Activated CD8-positive, alpha-beta T cell treated with anti-CD3 and anti-CD28 coated beads, Interleukin-2, amount 10 ng/mL, durations not matched to agents 7 days and 5 days (primary cell): ENCODE measurements at regions of chr1 and their contacts with region 1.

Region 1: DNA sequence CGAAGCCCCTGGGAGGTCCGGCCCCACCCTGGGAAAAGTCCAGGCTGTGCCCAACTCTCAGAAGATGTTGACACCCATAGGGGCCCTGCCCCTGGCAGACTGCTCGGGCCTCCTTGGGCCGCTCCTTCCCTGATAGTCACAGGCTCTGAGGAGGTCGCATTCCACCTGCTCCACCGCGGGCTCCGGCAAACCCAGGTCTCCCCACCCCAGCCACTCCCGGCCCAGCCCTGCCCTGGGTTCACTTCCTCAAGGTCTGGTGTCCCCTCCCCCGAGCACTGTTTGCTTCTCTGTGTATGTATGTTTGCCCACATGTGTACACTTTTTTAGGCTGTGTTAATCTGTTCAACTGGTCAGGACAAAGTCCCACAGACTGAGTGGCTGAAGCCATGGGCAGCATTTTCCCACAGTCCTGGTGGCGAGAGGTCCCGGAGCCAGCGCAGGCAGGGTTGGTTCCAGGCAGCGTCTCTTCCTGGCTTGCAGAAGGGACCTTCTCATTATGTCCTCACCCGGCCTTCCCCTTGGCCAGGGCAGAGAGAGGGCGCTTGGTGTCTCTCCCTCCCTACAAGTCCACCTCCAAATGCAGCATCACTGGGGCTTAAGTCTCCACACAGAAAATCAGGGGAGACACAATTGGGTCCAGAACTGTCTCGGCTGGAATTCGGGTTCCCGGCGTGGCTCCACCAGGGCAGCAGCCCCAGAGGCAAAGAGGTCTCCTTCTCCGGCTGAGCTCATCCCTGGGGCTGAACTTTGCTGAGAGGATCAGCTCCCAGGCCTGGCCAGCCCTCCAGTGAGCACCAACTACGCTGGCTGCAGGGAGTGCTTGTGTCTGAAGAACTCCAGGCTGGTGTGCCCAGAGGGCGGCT is 10.5 kb upstream of the PRXL2B start:
- DNase-seq: no peak
- ATAC-seq: no peak
- H3K4me3 Mint-ChIP-seq: no peak overlapping the region
- H3K27ac Mint-ChIP-seq: peak overlapping the region; percentile 55
- H3K4me1 Mint-ChIP-seq: peaks cover 56% of the 10 kb centered on the region
- H3K27me3 Mint-ChIP-seq: peaks cover 5% of the 10 kb centered on the region

Region 2: GRCh38 chr1:2556277-2556677 is 19.8 kb before region 1 on chr1 and contains the start of gene TNFRSF14:
- CTCF ChIA-PET with region 1: interaction called, 19 read pairs
- POLR2A ChIA-PET with region 1: interaction called, 60 read pairs
- DNase-seq: peak; percentile 90
- ATAC-seq: peak; percentile 77
- H3K4me3 Mint-ChIP-seq: peak within 1 kb of the TSS; percentile 97
- H3K27ac Mint-ChIP-seq: peak within 1 kb of the TSS; percentile 98
- H3K4me1 Mint-ChIP-seq: peaks cover 46% of the 10 kb centered on the region
- H3K27me3 Mint-ChIP-seq: no peaks in the 10 kb centered on the region
- total RNA-seq, gene TNFRSF14: 85.8 to 86.5 TPM

Region 3: DNA sequence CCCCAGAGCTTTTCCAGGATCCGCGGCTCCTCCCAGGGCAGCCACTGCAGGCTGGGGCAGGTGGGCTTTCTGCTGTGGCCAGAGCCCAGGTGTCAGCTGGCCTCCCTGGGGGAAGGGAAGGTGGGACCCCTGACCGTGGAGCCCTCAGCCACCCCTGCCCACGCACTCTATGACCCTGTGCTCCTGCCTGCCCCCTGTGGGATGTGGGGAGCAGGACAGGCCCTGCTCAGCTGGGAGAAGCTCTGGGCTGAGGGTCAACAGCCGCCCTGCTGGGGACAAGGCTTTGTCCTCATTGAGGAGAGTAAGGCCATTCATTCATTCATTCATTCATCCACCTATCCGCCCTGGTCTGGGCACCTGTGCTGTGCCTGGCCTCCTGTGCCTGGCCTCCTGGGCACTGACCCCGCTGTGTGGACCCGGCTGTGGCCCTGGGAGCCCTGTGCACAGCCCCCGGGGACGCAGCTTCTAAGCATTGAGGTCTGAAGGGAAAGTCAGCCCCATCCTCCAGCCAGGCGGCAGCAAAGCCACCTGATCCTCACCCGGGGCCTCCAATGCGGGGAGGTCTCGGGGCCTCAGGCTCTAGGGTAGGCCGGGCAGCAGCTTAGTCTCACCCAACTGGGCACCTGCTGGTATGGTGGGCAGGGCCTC is 14.0 kb before region 1 on chr1:
- CTCF ChIA-PET with region 1: interaction called, 19 read pairs
- POLR2A ChIA-PET with region 1: interaction called, 60 read pairs
- DNase-seq: no peak
- ATAC-seq: no peak
- H3K4me3 Mint-ChIP-seq: no peak overlapping the region
- H3K27ac Mint-ChIP-seq: no peak overlapping the region
- H3K4me1 Mint-ChIP-seq: peaks cover 26% of the 10 kb centered on the region
- H3K27me3 Mint-ChIP-seq: no peaks in the 10 kb centered on the region